ENCODE measurements at regions of chrX and their contacts with region 1.

Region 1: GRCh38 chrX:18390941-18391538 is 34.4 kb upstream of the CDKL5 start:
- DNase-seq: peak; percentile 67
- H3K4me3 ChIP-seq: no peak overlapping the region
- H3K27ac ChIP-seq: no peak overlapping the region
- H3K4me1 ChIP-seq: no peaks in the 10 kb centered on the region
- H3K27me3 ChIP-seq: no peaks in the 10 kb centered on the region
- CTCF ChIP-seq: peak; percentile 60 to 88 (median 74)
- EP300 ChIP-seq: no peak
- POLR2A ChIP-seq: no peak

Region 2: DNA sequence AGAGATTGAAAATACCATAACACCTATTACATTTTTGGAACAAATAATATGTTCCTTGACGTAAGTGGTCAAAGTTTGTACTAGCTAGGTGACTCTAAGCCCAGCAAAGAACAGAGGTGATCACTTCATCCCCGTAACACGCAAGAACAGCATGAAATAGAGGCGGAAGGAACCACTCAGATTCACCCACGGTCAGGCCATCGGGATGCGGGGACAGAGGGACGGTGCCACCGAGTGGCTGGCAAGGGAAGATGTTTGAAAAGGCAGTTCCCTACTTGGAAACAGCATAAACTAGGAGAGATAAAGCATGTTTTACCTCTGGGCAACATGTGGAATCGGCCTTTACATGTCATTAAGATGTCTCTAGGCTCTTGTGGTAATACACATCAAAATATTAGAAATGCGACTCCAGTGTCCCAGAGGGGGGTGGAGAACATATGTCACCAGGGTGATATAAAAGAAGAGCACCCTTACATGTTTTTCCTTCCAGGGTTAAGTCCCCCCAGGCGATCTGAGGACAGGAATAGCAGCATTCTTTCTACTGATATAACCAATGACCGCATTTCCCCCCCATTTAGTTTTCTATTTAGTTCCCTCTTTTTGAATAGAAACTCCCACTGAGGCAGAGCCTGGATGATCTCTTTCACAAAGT is 508.9 kb after region 1 on chrX:
- in situ Hi-C with region 1: loop called in 1 of 4 experiments (anchors 25 kb)
- intact Hi-C with region 1: loop called (anchors 5 kb)
- DNase-seq: no peak
- H3K4me3 ChIP-seq: no peak overlapping the region
- H3K27ac ChIP-seq: no peak overlapping the region
- H3K4me1 ChIP-seq: no peaks in the 10 kb centered on the region
- H3K27me3 ChIP-seq: no peaks in the 10 kb centered on the region
- CTCF ChIP-seq: peak in 1 of 5 experiments; percentile 14
- EP300 ChIP-seq: no peak
- POLR2A ChIP-seq: no peak